ENCODE measurements at regions of chr3 and their contacts with region 1.

Region 1: GRCh38 chr3:179181021-179181472 is 32.9 kb downstream of the PIK3CA start:
- DNase-seq: no peak
- ATAC-seq: peak; percentile 58
- H3K4me3 ChIP-seq: no peak overlapping the region
- H3K4me3 Mint-ChIP-seq: no peak overlapping the region
- H3K27ac ChIP-seq: no peak overlapping the region
- H3K27ac Mint-ChIP-seq: peak overlapping the region; percentile 46
- H3K4me1 ChIP-seq: peaks cover 13 to 33% of the 10 kb centered on the region in 2 donors
- H3K4me1 Mint-ChIP-seq: peaks cover 47% of the 10 kb centered on the region
- H3K27me3 ChIP-seq: no peaks in the 10 kb centered on the region
- H3K27me3 Mint-ChIP-seq: no peaks in the 10 kb centered on the region
- CTCF ChIP-seq: no peak

Region 2: GRCh38 chr3:179196098-179196497 is 15.1 kb after region 1 on chr3:
- CTCF ChIA-PET with region 1: interaction called, 3 read pairs
- POLR2A ChIA-PET with region 1: interaction called, 4 read pairs
- intact Hi-C with region 1: loop called (anchors 2 kb)
- DNase-seq: peak; percentile 35
- ATAC-seq: peak; percentile 49
- H3K4me3 ChIP-seq: no peak overlapping the region
- H3K4me3 Mint-ChIP-seq: peak overlapping the region; percentile 51
- H3K27ac ChIP-seq: peak overlapping the region in 1 of 2 donors; percentile 46
- H3K27ac Mint-ChIP-seq: peak overlapping the region; percentile 72
- H3K4me1 ChIP-seq: peaks cover 17 to 29% of the 10 kb centered on the region in 2 donors
- H3K4me1 Mint-ChIP-seq: peaks cover 45% of the 10 kb centered on the region
- H3K27me3 ChIP-seq: no peaks in the 10 kb centered on the region
- H3K27me3 Mint-ChIP-seq: no peaks in the 10 kb centered on the region
- CTCF ChIP-seq: no peak

Measured in B cell (primary cell).